ENCODE measurements at regions of chr6 and their contacts with region 1.

Region 1: GRCh38 chr6:12911387-12911960 is 194.9 kb downstream of the PHACTR1 start:
- DNase-seq: no peak
- H3K4me3 ChIP-seq: no peak overlapping the region
- H3K27ac ChIP-seq: no peak overlapping the region
- H3K4me1 ChIP-seq: peaks cover 0 to 8% (median 3%) of the 10 kb centered on the region in 4 experiments; a peak in 5 of 7 replicates
- H3K27me3 ChIP-seq: no peaks in the 10 kb centered on the region
- CTCF ChIP-seq: peak in 2 of 3 experiments; percentile 14 to 44; a peak in 2 of 4 replicates
- EP300 ChIP-seq: no peak
- POLR2A ChIP-seq: no peak
- RAD21 ChIP-seq: peak; percentile 54 to 60

Region 2: GRCh38 chr6:12718015-12718414 is 193.5 kb before region 1 on chr6:
- CTCF ChIA-PET with region 1: no interaction called
- POLR2A ChIA-PET with region 1: no interaction called
- DNase-seq: no peak
- H3K4me3 ChIP-seq: no peak overlapping the region
- H3K27ac ChIP-seq: no peak overlapping the region
- H3K4me1 ChIP-seq: 0 out of 7 replicates have a peak, but pooled peaks cover 0 to 2% (median 0%) of the 10 kb centered on the region in 4 experiments
- H3K27me3 ChIP-seq: no peaks in the 10 kb centered on the region
- CTCF ChIP-seq: no peak
- EP300 ChIP-seq: no peak
- POLR2A ChIP-seq: no peak
- RAD21 ChIP-seq: no peak

Region 3: DNA sequence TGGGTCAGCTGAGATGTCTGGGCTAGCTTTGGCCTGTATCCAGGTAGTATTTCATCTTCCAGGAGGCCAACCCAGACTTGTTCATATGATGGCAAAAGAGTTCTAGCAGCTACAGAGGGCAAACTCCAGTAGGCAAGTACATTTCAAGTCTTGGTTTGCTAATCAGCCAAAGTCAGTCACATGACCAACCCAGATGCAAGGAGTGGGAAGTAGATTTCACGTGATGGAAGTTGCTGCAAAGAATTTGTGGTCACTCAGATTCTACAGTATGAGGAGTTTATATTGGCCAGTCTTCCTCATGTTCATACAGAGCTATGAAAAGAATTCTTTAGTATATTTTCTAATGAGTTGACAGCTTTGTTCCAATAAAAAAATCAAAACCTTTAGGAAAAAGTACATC is 93.2 kb before region 1 on chr6:
- CTCF ChIA-PET with region 1: no interaction called
- POLR2A ChIA-PET with region 1: no interaction called
- DNase-seq: no peak
- H3K4me3 ChIP-seq: no peak overlapping the region
- H3K27ac ChIP-seq: no peak overlapping the region
- H3K4me1 ChIP-seq: no peaks in the 10 kb centered on the region
- H3K27me3 ChIP-seq: no peaks in the 10 kb centered on the region
- CTCF ChIP-seq: no peak
- EP300 ChIP-seq: no peak
- POLR2A ChIP-seq: no peak
- RAD21 ChIP-seq: no peak

Region 4: DNA sequence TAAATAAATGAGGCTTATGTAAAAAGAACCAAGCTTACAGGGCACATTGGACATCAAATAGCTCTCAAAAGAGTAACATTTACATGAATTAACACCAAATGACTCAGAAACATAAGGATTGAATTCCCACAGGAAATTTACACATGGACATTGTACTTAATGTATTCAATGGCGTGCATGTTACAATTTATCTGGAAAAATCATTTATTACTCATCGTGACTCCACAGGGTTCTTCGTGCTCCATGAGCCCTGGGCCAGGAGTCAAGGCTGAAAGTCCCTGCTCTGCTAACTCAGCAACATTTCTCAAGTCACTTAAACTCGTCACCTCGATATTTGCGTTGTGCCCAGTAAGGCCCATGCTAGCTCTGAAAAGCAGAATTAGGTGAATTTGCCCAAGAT is 36.4 kb before region 1 on chr6:
- CTCF ChIA-PET with region 1: no interaction called
- POLR2A ChIA-PET with region 1: no interaction called
- DNase-seq: no peak
- H3K4me3 ChIP-seq: no peak overlapping the region
- H3K27ac ChIP-seq: no peak overlapping the region
- H3K4me1 ChIP-seq: peaks cover 0 to 6% (median 2%) of the 10 kb centered on the region in 4 experiments; a peak in 2 of 7 replicates
- H3K27me3 ChIP-seq: no peaks in the 10 kb centered on the region
- CTCF ChIP-seq: no peak
- EP300 ChIP-seq: no peak
- POLR2A ChIP-seq: no peak
- RAD21 ChIP-seq: no peak

Region 5: DNA sequence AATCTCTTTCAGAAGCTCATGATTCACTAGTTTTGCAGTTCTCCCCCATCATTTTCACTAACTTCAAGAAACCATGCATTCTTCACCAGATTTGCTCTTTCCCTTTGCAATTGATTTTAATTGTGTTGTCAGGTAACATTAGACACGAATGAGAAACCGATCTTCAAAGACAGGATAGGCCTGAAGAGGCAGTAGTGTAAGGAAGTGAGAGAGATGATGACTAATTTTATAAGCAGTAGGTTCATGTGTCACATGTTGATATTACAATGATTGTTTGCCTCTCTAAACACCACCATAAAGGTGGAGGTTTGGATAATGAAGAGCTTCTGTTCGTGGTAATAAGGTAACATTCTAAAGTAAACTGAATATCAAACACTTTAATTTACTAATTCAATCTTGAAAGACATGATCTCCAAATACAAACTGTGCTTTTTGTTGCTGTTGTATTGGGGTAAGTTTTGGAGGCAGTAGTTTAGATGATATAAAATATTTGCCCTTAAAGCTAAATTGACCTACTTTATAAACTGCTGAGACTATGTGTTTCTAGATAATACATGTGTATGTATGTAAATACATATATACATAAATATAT is 12.3 kb after region 1 on chr6:
- CTCF ChIA-PET with region 1: interaction called, 23 read pairs
- POLR2A ChIA-PET with region 1: no interaction called
- DNase-seq: no peak
- H3K4me3 ChIP-seq: no peak overlapping the region
- H3K27ac ChIP-seq: no peak overlapping the region
- H3K4me1 ChIP-seq: peaks cover 0 to 2% (median 0%) of the 10 kb centered on the region in 4 experiments; a peak in 1 of 7 replicates
- H3K27me3 ChIP-seq: no peaks in the 10 kb centered on the region
- CTCF ChIP-seq: no peak
- EP300 ChIP-seq: no peak
- POLR2A ChIP-seq: no peak
- RAD21 ChIP-seq: no peak

Region 6: DNA sequence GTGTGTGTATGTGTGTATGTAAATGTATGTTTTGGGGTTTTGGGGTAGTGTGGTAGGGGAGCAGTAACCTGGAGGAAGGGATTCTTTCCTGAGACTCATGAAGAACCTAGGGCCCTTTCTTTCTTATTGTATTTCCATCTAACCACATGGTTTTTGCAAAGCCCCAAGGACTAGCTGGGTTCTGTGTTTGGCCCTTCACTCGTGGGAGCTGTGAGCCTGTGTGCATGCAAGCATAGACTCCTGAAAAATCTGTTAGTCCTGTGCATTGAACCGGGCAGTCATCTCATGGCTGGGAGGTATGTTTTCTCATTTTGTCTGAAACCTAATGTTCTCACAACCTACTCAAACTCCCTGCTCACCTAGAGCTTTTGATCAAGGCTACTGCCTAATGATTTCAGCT is 24.2 kb after region 1 on chr6:
- CTCF ChIA-PET with region 1: interaction called, 13 read pairs
- POLR2A ChIA-PET with region 1: no interaction called
- DNase-seq: no peak
- H3K4me3 ChIP-seq: no peak overlapping the region
- H3K27ac ChIP-seq: no peak overlapping the region
- H3K4me1 ChIP-seq: peaks cover 0 to 9% (median 4%) of the 10 kb centered on the region in 4 experiments; a peak in 3 of 7 replicates
- H3K27me3 ChIP-seq: no peaks in the 10 kb centered on the region; a peak in 1 of 7 replicates
- CTCF ChIP-seq: no peak
- EP300 ChIP-seq: no peak
- POLR2A ChIP-seq: no peak
- RAD21 ChIP-seq: no peak

Region 7: GRCh38 chr6:13120483-13121482 is 209.3 kb after region 1 on chr6:
- CTCF ChIA-PET with region 1: interaction called, 37 read pairs
- POLR2A ChIA-PET with region 1: no interaction called
- DNase-seq: no peak
- H3K4me3 ChIP-seq: no peak overlapping the region
- H3K27ac ChIP-seq: no peak overlapping the region
- H3K4me1 ChIP-seq: peaks cover 0 to 12% (median 8%) of the 10 kb centered on the region in 4 experiments; a peak in 6 of 7 replicates
- H3K27me3 ChIP-seq: no peaks in the 10 kb centered on the region
- CTCF ChIP-seq: peak; percentile 36 to 53 (median 38); a peak in 3 of 4 replicates
- EP300 ChIP-seq: no peak
- POLR2A ChIP-seq: no peak
- RAD21 ChIP-seq: peak; percentile 73 to 80

Region 8: GRCh38 chr6:13273931-13274706 is 362.6 kb after region 1 on chr6:
- CTCF ChIA-PET with region 1: interaction called, 12 read pairs
- POLR2A ChIA-PET with region 1: no interaction called
- DNase-seq: no peak
- H3K4me3 ChIP-seq: no peak overlapping the region
- H3K27ac ChIP-seq: no peak overlapping the region
- H3K4me1 ChIP-seq: 0 out of 7 replicates have a peak, but pooled peaks cover 0 to under 1% (median 0%) of the 10 kb centered on the region in 4 experiments
- H3K27me3 ChIP-seq: no peaks in the 10 kb centered on the region
- CTCF ChIP-seq: no peak
- EP300 ChIP-seq: no peak
- POLR2A ChIP-seq: no peak
- RAD21 ChIP-seq: no peak